MCF 10A (cell line): ENCODE measurements at regions of chr5 and their contacts with region 1.

Region 1: DNA sequence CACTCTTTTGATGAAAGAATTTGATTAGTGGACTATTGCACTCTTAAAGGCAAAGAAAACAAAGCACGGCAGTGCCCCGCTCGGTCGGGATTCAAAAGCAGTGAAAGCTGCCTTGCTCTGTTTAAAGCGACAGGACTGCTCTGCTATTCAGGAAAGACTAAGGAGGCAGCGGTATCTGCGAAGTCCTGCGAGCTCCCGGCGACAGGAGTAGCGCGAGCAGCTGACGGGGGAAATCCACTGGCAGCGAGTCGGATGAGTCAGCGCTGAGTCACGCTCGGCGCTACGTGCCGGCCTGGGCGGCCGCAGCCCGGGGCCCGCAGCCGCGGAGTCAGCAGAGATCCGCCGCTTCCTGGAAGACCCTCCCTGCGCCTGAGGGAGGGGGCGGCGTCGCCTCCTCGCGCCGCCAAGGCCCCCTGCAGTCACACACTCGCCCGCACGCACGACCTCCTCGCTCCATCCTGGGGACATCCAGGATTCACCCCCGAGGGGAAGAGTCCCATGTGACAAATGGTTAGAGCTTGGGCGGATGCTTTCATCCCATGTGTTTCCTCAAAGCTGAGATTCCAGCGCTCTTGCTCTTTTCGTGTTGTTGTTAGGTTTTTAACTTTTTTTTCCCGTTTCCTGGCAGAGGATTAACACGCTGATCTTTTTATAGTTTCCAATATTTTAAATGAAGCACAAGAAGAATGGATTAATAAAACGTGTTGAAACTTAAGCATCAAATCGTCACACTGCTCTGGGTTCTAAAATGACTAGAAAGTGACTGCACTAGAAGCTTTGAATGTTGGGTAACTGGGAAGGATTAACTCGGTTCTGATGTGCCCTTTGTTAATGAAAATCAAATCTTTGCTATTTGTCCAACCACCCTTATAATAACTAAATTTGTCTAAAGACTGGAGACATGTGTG is 102.5 kb downstream of the ARRDC3 start:
- DNase-seq: peak; percentile 96
- H3K4me3 Mint-ChIP-seq: peak overlapping the region; percentile 86
- H3K27ac Mint-ChIP-seq: peak overlapping the region; percentile 98
- H3K4me1 Mint-ChIP-seq: peaks cover 19% of the 10 kb centered on the region
- H3K27me3 Mint-ChIP-seq: no peaks in the 10 kb centered on the region
- CTCF ChIP-seq: no peak

Region 2: GRCh38 chr5:91162534-91163381 is 117.9 kb before region 1 on chr5:
- CTCF ChIA-PET with region 1: no interaction called
- POLR2A ChIA-PET with region 1: interaction called, 10 read pairs
- intact Hi-C with region 1: no loop called
- DNase-seq: peak; percentile 96
- H3K4me3 Mint-ChIP-seq: peak overlapping the region; percentile 10
- H3K27ac Mint-ChIP-seq: peak overlapping the region; percentile 68
- H3K4me1 Mint-ChIP-seq: peaks cover 19% of the 10 kb centered on the region
- H3K27me3 Mint-ChIP-seq: no peaks in the 10 kb centered on the region
- CTCF ChIP-seq: no peak

Region 3: GRCh38 chr5:91225848-91226686 is 54.5 kb before region 1 on chr5:
- CTCF ChIA-PET with region 1: interaction called, 4 read pairs
- POLR2A ChIA-PET with region 1: interaction called, 10 read pairs
- intact Hi-C with region 1: loop called (anchors 1 kb)
- DNase-seq: peak; percentile 70
- H3K4me3 Mint-ChIP-seq: no peak overlapping the region
- H3K27ac Mint-ChIP-seq: no peak overlapping the region
- H3K4me1 Mint-ChIP-seq: peaks cover 22% of the 10 kb centered on the region
- H3K27me3 Mint-ChIP-seq: no peaks in the 10 kb centered on the region
- CTCF ChIP-seq: peak; percentile 65

Region 4: GRCh38 chr5:91293131-91293530 is 12.5 kb after region 1 on chr5:
- CTCF ChIA-PET with region 1: interaction called, 5 read pairs
- POLR2A ChIA-PET with region 1: interaction called, 75 read pairs
- intact Hi-C with region 1: loop called (anchors 1 kb)
- DNase-seq: no peak
- H3K4me3 Mint-ChIP-seq: no peak overlapping the region
- H3K27ac Mint-ChIP-seq: no peak overlapping the region
- H3K4me1 Mint-ChIP-seq: peaks cover 17% of the 10 kb centered on the region
- H3K27me3 Mint-ChIP-seq: no peaks in the 10 kb centered on the region
- CTCF ChIP-seq: no peak

Region 5: DNA sequence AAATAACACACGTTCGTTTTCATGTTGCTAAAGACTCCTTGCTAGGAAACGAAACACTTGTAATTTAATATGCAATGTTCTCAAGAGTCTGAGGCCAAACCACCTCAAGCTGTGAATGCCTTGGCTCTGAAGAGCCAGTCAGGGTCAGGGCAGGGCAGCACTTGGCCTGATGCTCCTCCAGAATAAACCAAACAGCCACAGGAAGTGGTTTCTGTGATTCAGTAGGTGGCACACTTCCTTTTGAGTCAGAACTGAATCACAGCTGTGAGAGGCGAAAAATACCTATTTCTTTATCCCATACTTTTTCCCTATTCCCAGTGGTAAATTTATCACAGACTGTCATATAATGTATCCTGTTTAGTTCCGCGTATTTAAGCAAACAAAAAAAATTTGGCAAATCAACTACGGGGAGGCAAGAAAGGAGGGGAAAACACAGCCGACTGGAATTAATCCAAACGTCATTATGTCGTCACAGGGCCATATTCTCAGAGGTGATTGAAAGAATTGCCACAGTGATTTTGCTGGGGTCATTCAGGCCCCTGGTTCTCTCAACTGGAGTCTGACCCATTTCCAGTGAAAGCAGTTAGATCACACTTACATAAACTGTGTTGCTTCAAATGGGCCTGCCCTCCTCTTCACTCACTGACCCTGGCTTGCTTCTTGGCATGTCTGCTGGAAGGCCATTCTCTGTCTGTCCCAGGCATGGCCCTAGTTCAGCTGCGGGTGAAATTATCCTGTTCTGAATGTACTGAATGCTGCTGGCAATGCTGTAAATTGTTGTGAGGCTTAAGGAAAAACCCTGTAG is 31.3 kb after region 1 on chr5:
- CTCF ChIA-PET with region 1: interaction called, 4 read pairs
- POLR2A ChIA-PET with region 1: interaction called, 46 read pairs
- intact Hi-C with region 1: loop called (anchors 1 kb)
- DNase-seq: peak; percentile 98
- H3K4me3 Mint-ChIP-seq: peak overlapping the region; percentile 50
- H3K27ac Mint-ChIP-seq: peak overlapping the region; percentile 91
- H3K4me1 Mint-ChIP-seq: peaks cover 43% of the 10 kb centered on the region
- H3K27me3 Mint-ChIP-seq: no peaks in the 10 kb centered on the region
- CTCF ChIP-seq: no peak